Activated CD4-positive, alpha-beta T cell treated with anti-CD3 and anti-CD28 coated beads for 36 hours (primary cell): ENCODE measurements at regions of chr2 and their contacts with region 1.

Region 1: DNA sequence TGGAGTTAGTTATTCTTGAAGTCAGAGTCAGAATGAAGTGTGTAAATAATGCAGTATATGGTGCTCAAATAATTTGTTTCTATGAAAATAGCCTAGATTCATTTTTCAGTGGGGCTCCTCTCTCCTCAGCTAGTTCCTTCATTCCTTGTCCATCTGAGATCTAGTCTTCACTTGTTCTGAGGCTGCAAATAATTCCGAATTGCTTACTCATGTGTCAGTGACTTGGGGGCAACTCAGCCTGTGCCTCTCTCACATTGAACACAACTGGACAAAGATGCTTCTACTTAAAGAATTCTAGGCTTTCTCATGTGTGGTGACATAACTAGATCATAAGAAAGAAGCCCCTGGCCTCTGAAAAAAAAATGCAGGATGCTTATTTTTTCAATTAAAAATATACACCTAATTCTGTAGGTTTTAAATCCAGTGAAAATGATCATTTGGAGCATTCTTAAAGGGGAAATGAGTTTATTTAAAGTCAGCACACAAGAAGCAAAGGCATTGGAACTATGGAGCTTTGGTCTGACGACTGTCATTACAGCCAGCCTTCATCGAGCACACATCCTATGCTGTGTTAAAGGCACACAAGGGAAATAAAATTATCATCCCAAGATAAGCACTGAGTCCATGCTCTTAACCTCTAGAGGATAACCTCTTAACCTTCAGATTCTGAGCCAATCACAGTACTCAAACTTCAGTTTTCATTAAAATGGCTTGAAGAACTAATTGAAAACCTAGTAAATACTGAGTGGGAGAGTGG is 24.8 kb upstream of the SCN7A start:
- DNase-seq: no peak
- ATAC-seq: no peak
- H3K4me3 Mint-ChIP-seq: no peak overlapping the region
- H3K27ac Mint-ChIP-seq: no peak overlapping the region
- H3K4me1 Mint-ChIP-seq: no peaks in the 10 kb centered on the region
- H3K27me3 Mint-ChIP-seq: peaks cover 2% of the 10 kb centered on the region

Region 2: DNA sequence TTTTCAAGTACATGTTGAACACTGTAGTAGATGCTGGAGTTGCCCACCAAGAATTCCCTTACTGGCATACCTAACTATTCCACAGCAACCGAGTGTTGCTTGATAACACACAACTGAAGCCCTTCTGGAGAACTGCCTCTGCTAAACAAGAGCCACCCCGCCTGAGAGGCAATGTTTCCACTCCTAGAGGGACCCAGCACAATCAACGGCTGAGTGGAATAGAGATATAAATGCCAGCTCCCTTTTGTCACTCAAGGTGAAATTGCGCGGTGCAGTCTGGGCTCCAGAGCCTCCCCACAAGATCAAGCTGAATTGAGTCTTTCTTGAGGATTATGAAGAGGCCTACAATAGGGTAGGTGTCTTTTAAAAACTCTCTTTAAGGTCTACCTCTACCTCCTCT is 94.0 kb before region 1 on chr2:
- CTCF ChIA-PET with region 1: no interaction called
- POLR2A ChIA-PET with region 1: no interaction called
- intact Hi-C with region 1: loop called in 1 of 2 experiments (anchors 5 kb)
- DNase-seq: no peak
- ATAC-seq: no peak
- H3K4me3 Mint-ChIP-seq: no peak overlapping the region
- H3K27ac Mint-ChIP-seq: no peak overlapping the region
- H3K4me1 Mint-ChIP-seq: no peaks in the 10 kb centered on the region
- H3K27me3 Mint-ChIP-seq: no peaks in the 10 kb centered on the region

Region 3: GRCh38 chr2:166491461-166491860 is 27.4 kb before region 1 on chr2:
- CTCF ChIA-PET with region 1: no interaction called
- POLR2A ChIA-PET with region 1: no interaction called
- intact Hi-C with region 1: loop called in 1 of 2 experiments (anchors 1 kb)
- DNase-seq: no peak
- ATAC-seq: no peak
- H3K4me3 Mint-ChIP-seq: no peak overlapping the region
- H3K27ac Mint-ChIP-seq: no peak overlapping the region
- H3K4me1 Mint-ChIP-seq: no peaks in the 10 kb centered on the region
- H3K27me3 Mint-ChIP-seq: peaks cover 8% of the 10 kb centered on the region